ENCODE measurements at regions of chr15 and their contacts with region 1.

Region 1: GRCh38 chr15:82849556-82850512 is 40.4 kb downstream of the WHAMM start:
- DNase-seq: peak; percentile 95 to 98 (median 98)
- H3K4me3 ChIP-seq: peak overlapping the region in 3 of 7 experiments; percentile 12 to 61 (median 37)
- H3K27ac ChIP-seq: peak overlapping the region in 1 of 2 experiments; percentile 37
- H3K4me1 ChIP-seq: peaks cover 8 to 49% (median 38%) of the 10 kb centered on the region in 4 experiments
- H3K27me3 ChIP-seq: no peaks in the 10 kb centered on the region

Region 2: DNA sequence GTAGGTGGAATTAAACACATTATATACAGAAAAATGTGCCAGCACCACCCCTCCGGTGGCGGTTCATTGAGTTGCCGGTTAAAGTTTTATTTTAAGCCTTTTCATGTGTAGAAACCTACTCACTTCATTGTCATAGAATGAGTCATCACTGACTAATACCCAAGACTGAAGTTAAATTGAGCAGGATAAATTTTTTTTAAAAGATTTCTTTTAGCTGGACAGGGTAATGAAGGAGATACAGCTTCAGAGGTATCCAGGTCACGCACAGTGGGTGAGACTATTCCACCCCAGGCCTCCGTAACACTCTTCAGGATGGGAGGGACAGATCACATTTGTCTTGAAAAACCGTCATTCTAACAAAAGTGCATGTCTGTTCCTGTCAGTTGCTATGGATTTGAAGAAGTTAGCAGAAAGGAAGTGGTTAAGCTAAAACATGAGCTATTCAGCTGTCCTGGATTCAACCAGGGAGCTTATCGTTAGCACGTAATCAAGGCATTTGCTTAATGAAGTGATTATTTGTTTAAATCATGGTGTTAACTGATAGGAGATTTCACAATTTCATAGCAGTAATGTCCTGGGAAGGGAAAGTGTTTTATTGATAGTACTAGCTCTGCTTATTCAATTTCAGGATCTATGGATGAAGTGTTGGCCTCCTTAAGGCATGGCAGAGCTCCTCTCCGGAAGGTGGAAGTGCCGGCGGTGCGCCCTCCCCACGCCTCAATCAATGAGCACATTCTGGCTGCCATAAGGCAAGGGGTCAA is 17.1 kb before region 1 on chr15:
- CTCF ChIA-PET with region 1: interaction called, 10 read pairs
- POLR2A ChIA-PET with region 1: interaction called, 5 read pairs
- DNase-seq: peak; percentile 66 to 93 (median 89)
- H3K4me3 ChIP-seq: peak overlapping the region in 3 of 7 experiments; percentile 1 to 41 (median 12)
- H3K27ac ChIP-seq: peak overlapping the region; percentile 76 to 92
- H3K4me1 ChIP-seq: peaks cover 7 to 26% (median 23%) of the 10 kb centered on the region in 4 experiments
- H3K27me3 ChIP-seq: no peaks in the 10 kb centered on the region

Region 3: GRCh38 chr15:82985688-82986441 is 136.0 kb after region 1 on chr15 and contains the start of gene RAMAC:
- CTCF ChIA-PET with region 1: interaction called, 10 read pairs
- POLR2A ChIA-PET with region 1: interaction called, 4 read pairs
- DNase-seq: peak; percentile 98 to 99 (median 99)
- H3K4me3 ChIP-seq: peak within 1 kb of the TSS; percentile 76 to 98 (median 84)
- H3K27ac ChIP-seq: peak within 1 kb of the TSS; percentile 77 to 89
- H3K4me1 ChIP-seq: peaks cover 12 to 19% (median 16%) of the 10 kb centered on the region in 4 experiments
- H3K27me3 ChIP-seq: no peaks in the 10 kb centered on the region

Measured in common myeloid progenitor, CD34-positive (primary cell).